Activated CD8-positive, alpha-beta T cell treated with anti-CD3 and anti-CD28 coated beads, Interleukin-2, amount 10 ng/mL, durations not matched to agents 7 days and 5 days (primary cell): ENCODE measurements at regions of chr12 and their contacts with region 1.

Region 1: GRCh38 chr12:50222275-50222795 is 55.2 kb upstream of the CERS5 start:
- DNase-seq: peak; percentile 40
- ATAC-seq: peak; percentile 60
- H3K4me3 Mint-ChIP-seq: no peak overlapping the region
- H3K27ac Mint-ChIP-seq: no peak overlapping the region
- H3K4me1 Mint-ChIP-seq: peaks cover 23% of the 10 kb centered on the region
- H3K27me3 Mint-ChIP-seq: no peaks in the 10 kb centered on the region

Region 2: DNA sequence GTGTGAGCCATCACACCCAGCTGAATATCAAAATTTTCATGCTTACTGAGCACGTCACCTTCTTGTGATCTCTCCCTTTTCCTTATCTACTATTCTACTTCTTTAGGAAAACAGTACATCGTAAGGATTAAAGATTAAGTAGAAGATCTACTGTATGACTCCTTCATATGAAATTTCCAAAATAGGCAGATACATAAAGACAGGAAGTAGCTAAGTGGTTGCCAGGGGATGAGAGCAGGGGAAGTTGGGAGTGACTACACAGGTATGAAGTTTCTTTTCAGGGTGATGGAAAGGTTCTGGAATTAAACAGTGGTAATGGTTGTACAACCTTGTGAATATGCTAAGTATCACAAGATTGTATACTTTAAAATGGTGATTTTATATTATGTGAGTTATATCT is 18.6 kb before region 1 on chr12:
- CTCF ChIA-PET with region 1: interaction called, 10 read pairs
- POLR2A ChIA-PET with region 1: no interaction called
- DNase-seq: no peak
- ATAC-seq: no peak
- H3K4me3 Mint-ChIP-seq: no peak overlapping the region
- H3K27ac Mint-ChIP-seq: no peak overlapping the region
- H3K4me1 Mint-ChIP-seq: no peaks in the 10 kb centered on the region
- H3K27me3 Mint-ChIP-seq: no peaks in the 10 kb centered on the region

Region 3: DNA sequence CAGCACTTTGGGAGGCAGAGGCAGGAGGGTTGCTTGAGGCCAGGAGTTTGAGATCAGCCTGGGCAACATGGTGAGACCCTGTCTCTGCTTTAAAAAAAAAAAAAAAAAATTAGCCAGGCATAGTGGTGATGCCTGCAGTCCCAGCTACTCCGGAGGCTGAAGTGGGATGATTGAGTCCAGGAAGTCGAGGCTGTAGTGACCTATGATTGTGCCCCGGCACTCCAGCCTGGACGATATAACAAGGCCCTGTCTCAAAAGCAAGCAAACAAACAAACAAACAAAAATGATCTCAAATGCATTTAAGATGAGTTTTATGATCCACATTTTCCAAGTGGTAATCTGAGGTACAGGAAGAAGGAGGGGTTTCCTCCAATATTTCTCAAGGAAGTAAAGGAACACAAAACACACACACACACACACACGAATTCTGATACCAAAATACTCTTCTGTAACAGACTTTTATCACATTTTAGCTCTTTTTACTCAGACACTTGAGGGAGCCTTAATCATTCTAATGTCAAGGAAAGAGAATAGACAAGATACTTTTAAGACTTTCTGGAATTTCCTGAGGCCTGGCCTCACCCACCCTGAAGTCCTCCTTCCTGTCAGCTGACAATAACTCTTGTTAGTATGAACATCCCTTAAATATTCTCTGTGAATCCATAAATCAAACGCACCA is 10.8 kb before region 1 on chr12:
- CTCF ChIA-PET with region 1: interaction called, 34 read pairs
- POLR2A ChIA-PET with region 1: interaction called, 14 read pairs
- DNase-seq: no peak
- ATAC-seq: peak; percentile 39
- H3K4me3 Mint-ChIP-seq: peak overlapping the region; percentile 32
- H3K27ac Mint-ChIP-seq: peak overlapping the region; percentile 85
- H3K4me1 Mint-ChIP-seq: peaks cover 39% of the 10 kb centered on the region
- H3K27me3 Mint-ChIP-seq: no peaks in the 10 kb centered on the region

Region 4: GRCh38 chr12:50283229-50283923 is 61.0 kb after region 1 on chr12 and contains the start of gene LIMA1:
- CTCF ChIA-PET with region 1: interaction called, 13 read pairs
- POLR2A ChIA-PET with region 1: interaction called, 16 read pairs
- DNase-seq: peak; percentile 94
- ATAC-seq: peak; percentile 98
- H3K4me3 Mint-ChIP-seq: peak within 1 kb of the TSS; percentile 87
- H3K27ac Mint-ChIP-seq: peak within 1 kb of the TSS; percentile 85
- H3K4me1 Mint-ChIP-seq: peaks cover 20% of the 10 kb centered on the region
- H3K27me3 Mint-ChIP-seq: peaks cover 13% of the 10 kb centered on the region
- total RNA-seq, gene LIMA1: 19.4 to 19.9 TPM

Region 5: DNA sequence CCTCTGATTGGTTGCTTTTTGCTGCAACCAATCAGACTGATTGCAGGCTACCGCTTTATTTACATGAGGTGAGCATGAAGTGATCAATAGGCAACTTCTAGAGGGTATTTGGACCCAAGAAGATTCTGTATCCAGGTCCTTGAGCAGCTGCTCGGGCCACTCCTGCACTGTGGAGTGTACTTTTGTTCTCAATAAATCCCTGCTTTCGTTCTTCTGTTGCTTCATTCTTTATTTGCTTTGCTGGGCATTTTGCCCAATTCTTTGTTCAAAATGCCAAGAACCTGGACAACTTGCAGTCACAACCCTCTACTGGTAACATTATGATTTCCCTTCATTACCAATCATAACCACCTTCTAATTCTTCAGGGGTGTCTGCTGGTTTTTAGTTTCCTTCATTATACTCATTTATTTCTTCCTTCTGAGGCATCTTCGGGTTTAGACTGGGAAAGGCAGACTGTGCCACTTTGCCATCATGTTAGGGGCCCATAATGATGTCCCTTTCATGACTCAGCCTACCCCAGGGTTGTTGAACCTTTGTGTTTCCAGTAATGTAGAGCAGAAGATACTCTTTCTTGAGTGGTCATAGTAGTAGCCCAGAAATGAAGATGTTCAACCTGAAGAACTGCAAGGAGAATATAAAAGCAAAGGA is 104.4 kb after region 1 on chr12:
- CTCF ChIA-PET with region 1: no interaction called
- POLR2A ChIA-PET with region 1: no interaction called
- DNase-seq: no peak
- ATAC-seq: no peak
- H3K4me3 Mint-ChIP-seq: no peak overlapping the region
- H3K27ac Mint-ChIP-seq: no peak overlapping the region
- H3K4me1 Mint-ChIP-seq: no peaks in the 10 kb centered on the region
- H3K27me3 Mint-ChIP-seq: no peaks in the 10 kb centered on the region

Region 6: GRCh38 chr12:50603817-50604639 is 381.7 kb after region 1 on chr12:
- CTCF ChIA-PET with region 1: no interaction called
- POLR2A ChIA-PET with region 1: no interaction called
- DNase-seq: no peak
- ATAC-seq: no peak
- H3K4me3 Mint-ChIP-seq: no peak overlapping the region
- H3K27ac Mint-ChIP-seq: no peak overlapping the region
- H3K4me1 Mint-ChIP-seq: peaks cover 14% of the 10 kb centered on the region
- H3K27me3 Mint-ChIP-seq: no peaks in the 10 kb centered on the region